CD8-positive, alpha-beta T cell (primary cell): ENCODE measurements at regions of chr12 and their contacts with region 1.

Region 1: GRCh38 chr12:62361048-62361447 is 100.8 kb downstream of the USP15 start:
- DNase-seq: no peak
- ATAC-seq: no peak
- H3K4me3 ChIP-seq: no peak overlapping the region
- H3K4me3 Mint-ChIP-seq: no peak overlapping the region
- H3K27ac ChIP-seq: no peak overlapping the region
- H3K27ac Mint-ChIP-seq: no peak overlapping the region
- H3K4me1 ChIP-seq: no peaks in the 10 kb centered on the region
- H3K4me1 Mint-ChIP-seq: peaks cover 38% of the 10 kb centered on the region
- H3K27me3 ChIP-seq: no peaks in the 10 kb centered on the region
- H3K27me3 Mint-ChIP-seq: no peaks in the 10 kb centered on the region
- CTCF ChIP-seq: no peak

Region 2: GRCh38 chr12:62146318-62146717 is 214.7 kb before region 1 on chr12:
- CTCF ChIA-PET with region 1: no interaction called
- POLR2A ChIA-PET with region 1: no interaction called
- intact Hi-C with region 1: no loop called
- DNase-seq: no peak
- ATAC-seq: no peak
- H3K4me3 ChIP-seq: no peak overlapping the region
- H3K4me3 Mint-ChIP-seq: no peak overlapping the region
- H3K27ac ChIP-seq: no peak overlapping the region
- H3K27ac Mint-ChIP-seq: no peak overlapping the region
- H3K4me1 ChIP-seq: no peaks in the 10 kb centered on the region
- H3K4me1 Mint-ChIP-seq: no peaks in the 10 kb centered on the region
- H3K27me3 ChIP-seq: no peaks in the 10 kb centered on the region
- H3K27me3 Mint-ChIP-seq: no peaks in the 10 kb centered on the region
- CTCF ChIP-seq: no peak

Region 3: DNA sequence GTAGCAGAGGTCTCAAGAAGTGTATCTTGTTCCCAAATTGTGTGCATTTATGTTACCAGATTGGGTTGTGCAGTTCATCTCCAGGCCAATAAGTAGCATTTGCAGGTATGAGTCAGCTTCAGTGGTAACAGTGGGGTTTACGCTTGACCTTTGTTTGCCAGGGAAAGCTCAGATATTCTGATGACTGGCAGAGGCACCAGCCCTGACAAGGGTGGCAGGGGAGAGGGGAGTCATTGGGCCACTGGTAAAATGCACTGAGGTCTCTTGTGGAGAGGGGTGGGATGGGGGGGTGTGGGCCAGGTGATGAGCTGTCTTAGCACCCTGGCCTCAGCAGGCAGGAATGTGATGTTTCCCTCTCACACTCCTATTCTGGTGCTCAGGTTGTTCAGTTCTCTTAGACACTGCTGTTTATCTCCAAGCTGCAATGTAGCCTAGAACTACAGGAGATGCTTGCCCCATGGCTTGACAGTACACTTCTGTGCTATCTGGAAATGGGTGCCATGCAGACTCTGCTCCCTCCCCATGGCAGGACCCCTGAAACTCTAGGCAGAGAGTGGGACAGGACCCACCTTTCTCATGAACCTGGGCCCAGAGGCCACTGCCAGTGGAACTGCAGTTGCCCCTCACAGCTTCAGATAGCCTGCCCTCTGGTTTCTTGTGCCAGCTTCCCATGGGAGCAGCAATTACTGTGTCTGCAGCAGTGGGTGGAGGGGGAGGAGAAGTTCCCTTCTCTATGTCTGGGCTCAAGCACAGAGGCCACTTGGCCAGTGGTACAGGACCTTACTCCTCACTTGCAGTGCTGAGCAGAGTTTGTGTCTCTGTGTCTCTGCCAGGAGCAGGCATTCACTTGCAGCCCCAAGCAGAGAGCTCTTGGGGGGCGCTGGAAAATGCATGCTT is 68.9 kb before region 1 on chr12:
- CTCF ChIA-PET with region 1: no interaction called
- POLR2A ChIA-PET with region 1: no interaction called
- intact Hi-C with region 1: no loop called
- DNase-seq: no peak
- ATAC-seq: no peak
- H3K4me3 ChIP-seq: no peak overlapping the region
- H3K4me3 Mint-ChIP-seq: no peak overlapping the region
- H3K27ac ChIP-seq: no peak overlapping the region
- H3K27ac Mint-ChIP-seq: peak overlapping the region; percentile 72
- H3K4me1 ChIP-seq: peaks cover 20% of the 10 kb centered on the region
- H3K4me1 Mint-ChIP-seq: peaks cover 72% of the 10 kb centered on the region
- H3K27me3 ChIP-seq: no peaks in the 10 kb centered on the region
- H3K27me3 Mint-ChIP-seq: no peaks in the 10 kb centered on the region
- CTCF ChIP-seq: no peak

Region 4: DNA sequence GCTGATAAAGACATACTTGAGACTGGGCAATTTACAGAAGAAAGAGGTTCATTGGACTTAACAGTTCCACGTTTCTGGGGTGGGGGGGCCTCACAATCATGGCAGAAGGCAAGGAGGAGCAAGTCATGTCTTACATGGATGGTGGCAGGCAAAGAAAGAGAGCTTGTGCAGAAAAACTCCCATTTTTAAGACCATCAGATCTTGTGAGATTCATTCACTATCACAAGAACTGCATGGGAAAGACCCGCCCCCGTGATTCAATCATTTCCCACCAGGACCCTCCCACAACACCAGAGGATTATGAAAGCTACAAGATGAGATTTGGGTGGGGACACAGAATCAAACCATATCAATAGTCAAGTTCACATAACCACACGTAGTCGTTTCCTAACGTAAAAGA is 15.4 kb before region 1 on chr12:
- CTCF ChIA-PET with region 1: no interaction called
- POLR2A ChIA-PET with region 1: no interaction called
- intact Hi-C with region 1: no loop called
- DNase-seq: no peak
- ATAC-seq: no peak
- H3K4me3 ChIP-seq: no peak overlapping the region
- H3K4me3 Mint-ChIP-seq: no peak overlapping the region
- H3K27ac ChIP-seq: no peak overlapping the region
- H3K27ac Mint-ChIP-seq: peak overlapping the region; percentile 4
- H3K4me1 ChIP-seq: no peaks in the 10 kb centered on the region
- H3K4me1 Mint-ChIP-seq: peaks cover 44% of the 10 kb centered on the region
- H3K27me3 ChIP-seq: no peaks in the 10 kb centered on the region
- H3K27me3 Mint-ChIP-seq: no peaks in the 10 kb centered on the region
- CTCF ChIP-seq: no peak

Region 5: DNA sequence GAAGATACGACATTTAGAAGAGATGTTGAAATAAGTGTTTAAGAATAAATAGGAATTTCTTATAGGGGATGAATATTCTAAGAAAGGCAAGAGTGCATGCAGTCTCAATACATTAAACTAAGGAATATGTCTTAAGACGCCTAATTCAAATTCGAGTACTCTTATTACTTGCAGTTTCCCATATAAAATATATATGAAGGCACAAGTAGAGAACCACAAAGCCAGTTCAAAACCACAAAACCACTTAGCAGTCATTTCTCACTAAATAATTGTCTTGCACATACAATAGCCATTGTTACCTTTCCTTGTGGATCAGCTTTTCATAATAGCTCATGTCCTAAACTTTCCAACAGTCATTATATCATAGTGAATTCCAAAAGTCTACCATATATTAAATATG is 14.6 kb after region 1 on chr12:
- CTCF ChIA-PET with region 1: no interaction called
- POLR2A ChIA-PET with region 1: interaction called, 3 read pairs
- intact Hi-C with region 1: loop called in 1 of 2 experiments (anchors 2 kb)
- DNase-seq: no peak
- ATAC-seq: no peak
- H3K4me3 ChIP-seq: no peak overlapping the region
- H3K4me3 Mint-ChIP-seq: no peak overlapping the region
- H3K27ac ChIP-seq: no peak overlapping the region
- H3K27ac Mint-ChIP-seq: peak overlapping the region; percentile 13
- H3K4me1 ChIP-seq: peaks cover 3% of the 10 kb centered on the region
- H3K4me1 Mint-ChIP-seq: peaks cover 36% of the 10 kb centered on the region
- H3K27me3 ChIP-seq: no peaks in the 10 kb centered on the region
- H3K27me3 Mint-ChIP-seq: no peaks in the 10 kb centered on the region
- CTCF ChIP-seq: no peak